Activated T-helper 1 cell treated with anti-CD3 and anti-CD28 coated beads, Interleukin-12 subunit alpha, Interleukin-12 subunit beta, Interleukin-2, Interleukin-4 antibody, amounts not matched to agents 30 ng/mL and 10 ng/mL and 1 ng/mL, durations not matched to agents 14 hours and 24 hours and 36 hours (primary cell): ENCODE measurements at regions of chr14 and their contacts with region 1.

Region 1: GRCh38 chr14:57199921-57200320 is 68.8 kb downstream of the EXOC5 start:
- DNase-seq: no peak
- H3K4me3 Mint-ChIP-seq: no peak overlapping the region
- H3K27ac Mint-ChIP-seq: no peak overlapping the region
- H3K4me1 Mint-ChIP-seq: no peaks in the 10 kb centered on the region
- H3K27me3 Mint-ChIP-seq: peaks cover 6% of the 10 kb centered on the region

Region 2: DNA sequence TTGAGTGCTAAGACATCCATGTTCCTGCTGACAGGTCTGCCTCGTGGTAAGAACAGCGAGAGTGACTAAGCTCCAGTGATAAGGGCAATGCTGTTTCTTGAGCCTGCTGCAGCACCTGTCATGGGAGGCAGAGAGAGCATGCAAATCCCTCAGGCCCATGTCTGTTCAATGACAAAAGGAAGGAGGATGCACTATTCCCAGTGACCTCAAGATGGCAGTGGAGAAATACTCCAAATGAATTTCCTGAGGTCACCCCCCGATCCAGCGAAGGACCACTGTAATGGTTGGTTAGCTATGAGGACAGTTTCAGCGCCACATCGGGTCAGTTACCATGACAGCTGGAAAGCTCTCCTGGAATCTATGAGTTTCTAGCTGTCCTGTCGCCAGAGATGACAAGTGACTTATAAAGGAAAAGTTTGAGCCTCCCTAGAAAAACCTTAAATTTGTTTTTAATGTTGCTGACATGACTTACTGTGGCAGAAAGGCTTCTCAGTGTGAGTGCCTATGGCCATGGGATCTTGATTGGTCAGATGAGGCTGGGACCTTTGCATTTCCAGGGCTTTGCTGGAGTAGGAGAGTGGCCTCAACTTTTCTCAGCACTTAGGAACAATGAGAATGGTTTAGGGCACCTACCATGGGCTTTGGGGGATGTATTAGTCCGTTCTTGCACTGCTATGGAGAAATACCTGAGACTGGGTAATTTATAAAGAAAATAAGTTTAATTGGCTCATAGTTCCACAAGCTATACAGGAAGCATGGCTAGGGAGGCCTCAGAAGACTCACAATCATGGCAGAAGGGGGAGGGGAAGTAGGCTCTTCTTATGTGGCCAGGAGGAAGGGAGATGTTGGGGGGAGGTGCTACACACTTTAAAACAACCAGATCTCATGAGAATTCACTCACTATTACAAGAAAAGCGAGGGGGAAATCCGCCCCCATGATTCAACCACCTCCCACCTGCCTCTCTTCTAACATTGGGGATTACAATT is 708.3 kb before region 1 on chr14:
- intact Hi-C with region 1: loop called (anchors 2 kb)
- DNase-seq: peak; percentile 2
- H3K4me3 Mint-ChIP-seq: no peak overlapping the region
- H3K27ac Mint-ChIP-seq: no peak overlapping the region
- H3K4me1 Mint-ChIP-seq: peaks cover 7% of the 10 kb centered on the region
- H3K27me3 Mint-ChIP-seq: no peaks in the 10 kb centered on the region